Caco-2 (cell line): ENCODE measurements at regions of chr19 and their contacts with region 1.

Region 1: GRCh38 chr19:42244347-42245220 is 2.2 kb upstream of the GSK3A start:
- DNase-seq: peak; percentile 95
- H3K4me3 ChIP-seq: peak overlapping the region; percentile 77
- H3K4me3 Mint-ChIP-seq: peak overlapping the region; percentile 85
- H3K27ac Mint-ChIP-seq: peak overlapping the region; percentile 66
- H3K4me1 ChIP-seq: peaks cover 10% of the 10 kb centered on the region; the same call in 1 of the 2 replicates
- H3K4me1 Mint-ChIP-seq: peaks cover 20% of the 10 kb centered on the region
- H3K27me3 ChIP-seq: no peaks in the 10 kb centered on the region
- H3K27me3 Mint-ChIP-seq: no peaks in the 10 kb centered on the region
- CTCF ChIP-seq: peak; percentile 69 to 75

Region 2: DNA sequence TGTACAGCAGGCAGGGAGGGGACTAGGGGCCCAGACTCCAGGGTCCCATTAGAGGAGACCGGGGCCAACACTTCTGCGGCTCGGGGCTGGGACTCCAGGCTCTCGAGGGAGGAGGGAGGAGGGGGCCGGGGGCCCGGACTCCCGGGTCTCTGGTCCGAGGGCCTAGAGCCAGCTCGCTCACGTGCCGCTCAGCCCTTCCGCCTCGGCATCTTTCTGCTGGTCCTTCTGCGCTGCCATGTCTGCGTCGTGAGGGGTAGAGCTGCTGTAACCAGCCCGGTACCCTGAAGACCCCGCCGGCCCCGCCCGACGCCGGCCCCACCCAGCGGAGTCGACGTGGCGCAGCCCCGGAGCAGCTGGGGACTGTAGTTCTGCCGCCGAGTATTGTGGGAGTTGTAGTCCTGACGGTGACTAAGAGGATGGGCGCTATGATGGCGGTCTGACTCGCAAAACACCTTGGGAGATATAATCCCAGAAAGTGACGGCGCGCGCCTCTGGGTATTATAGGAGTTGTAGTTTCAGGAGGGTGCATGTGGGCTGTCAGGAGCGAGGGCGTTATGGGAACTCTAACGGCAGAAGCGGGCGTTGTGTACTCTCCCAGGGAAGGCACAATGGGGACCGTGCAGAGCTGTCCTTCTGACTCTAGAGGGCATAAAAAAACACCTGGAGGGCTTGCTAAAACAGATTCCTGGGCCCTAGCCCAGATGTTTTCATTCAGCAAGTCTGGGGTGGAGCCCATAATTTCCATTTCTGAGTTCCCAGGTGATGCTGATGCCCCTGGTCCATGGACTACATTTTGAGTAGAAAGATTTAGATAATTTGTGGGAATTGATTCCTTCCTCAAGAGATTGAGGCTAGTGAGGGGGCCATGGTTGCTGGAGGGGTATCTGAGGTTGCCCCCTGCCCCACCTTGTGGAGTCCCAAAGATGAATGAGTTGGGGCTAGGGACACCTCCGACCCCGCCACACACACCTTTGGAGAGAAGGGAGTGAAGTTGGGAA is 285.2 kb before region 1 on chr19 and contains the start of gene RABAC1:
- CTCF ChIA-PET with region 1: no interaction called
- POLR2A ChIA-PET with region 1: no interaction called
- intact Hi-C with region 1: loop called (anchors 1 kb)
- DNase-seq: peak; percentile 93 to 95
- H3K4me3 ChIP-seq: peak within 1 kb of the TSS; percentile 82
- H3K4me3 Mint-ChIP-seq: peak within 1 kb of the TSS; percentile 78
- H3K27ac Mint-ChIP-seq: peak within 1 kb of the TSS; percentile 81
- H3K4me1 ChIP-seq: peaks cover 14% of the 10 kb centered on the region
- H3K4me1 Mint-ChIP-seq: peaks cover 13% of the 10 kb centered on the region
- H3K27me3 ChIP-seq: no peaks in the 10 kb centered on the region
- H3K27me3 Mint-ChIP-seq: no peaks in the 10 kb centered on the region
- CTCF ChIP-seq: peak in 1 of 2 experiments; percentile 44
- total RNA-seq, gene RABAC1: 64.4 and 70.7 TPM in 2 replicates

Region 3: DNA sequence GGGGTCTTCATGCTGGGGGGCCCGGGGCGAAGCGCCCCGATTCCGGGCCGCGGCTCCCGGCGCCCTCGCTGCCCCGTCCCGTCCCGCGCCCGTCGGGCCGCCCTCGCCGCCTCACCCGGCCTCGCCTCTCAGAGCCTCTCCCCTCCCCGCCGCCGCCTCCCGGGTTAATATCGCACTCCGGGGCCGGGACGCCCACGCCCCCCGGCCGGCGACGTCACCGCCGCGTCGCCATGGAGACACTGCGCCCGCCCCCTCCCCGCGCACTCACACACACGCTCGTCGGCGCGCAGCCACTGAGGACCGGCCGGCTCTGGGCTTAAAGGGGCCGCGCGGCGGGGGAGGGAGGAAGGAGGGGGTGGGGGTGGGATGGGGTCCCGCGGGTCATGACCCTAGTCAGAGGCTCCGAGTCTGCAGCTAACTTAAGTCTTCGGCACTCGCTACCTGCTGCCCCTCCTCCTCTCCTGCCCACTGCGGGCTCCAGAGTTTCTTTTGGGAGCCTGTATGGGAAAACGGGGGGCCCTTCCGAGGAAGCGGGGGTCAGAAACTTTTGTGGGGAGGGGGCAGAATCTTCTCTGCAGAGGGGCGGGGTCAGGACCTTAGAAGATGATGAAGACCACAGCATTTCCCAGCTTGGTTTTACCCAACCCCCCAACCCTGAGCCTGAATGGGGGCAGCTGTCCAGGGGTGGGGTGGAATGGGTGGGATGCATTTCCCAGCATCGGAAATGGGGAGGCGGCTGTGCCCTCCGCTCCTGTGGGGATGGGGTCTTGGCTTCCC is 10.6 kb after region 1 on chr19 and contains the start of gene ERF:
- CTCF ChIA-PET with region 1: interaction called, 3 read pairs
- POLR2A ChIA-PET with region 1: interaction called, 6 read pairs
- intact Hi-C with region 1: loop called (anchors 1 kb)
- DNase-seq: peak; percentile 93 to 97
- H3K4me3 ChIP-seq: peak within 1 kb of the TSS; percentile 74
- H3K4me3 Mint-ChIP-seq: peak within 1 kb of the TSS; percentile 87
- H3K27ac Mint-ChIP-seq: peak within 1 kb of the TSS; percentile 89
- H3K4me1 ChIP-seq: peaks cover 21% of the 10 kb centered on the region
- H3K4me1 Mint-ChIP-seq: peaks cover 21% of the 10 kb centered on the region
- H3K27me3 ChIP-seq: no peaks in the 10 kb centered on the region
- H3K27me3 Mint-ChIP-seq: no peaks in the 10 kb centered on the region
- CTCF ChIP-seq: no peak
- total RNA-seq, gene ERF: 134 and 149 TPM in 2 replicates

Region 4: DNA sequence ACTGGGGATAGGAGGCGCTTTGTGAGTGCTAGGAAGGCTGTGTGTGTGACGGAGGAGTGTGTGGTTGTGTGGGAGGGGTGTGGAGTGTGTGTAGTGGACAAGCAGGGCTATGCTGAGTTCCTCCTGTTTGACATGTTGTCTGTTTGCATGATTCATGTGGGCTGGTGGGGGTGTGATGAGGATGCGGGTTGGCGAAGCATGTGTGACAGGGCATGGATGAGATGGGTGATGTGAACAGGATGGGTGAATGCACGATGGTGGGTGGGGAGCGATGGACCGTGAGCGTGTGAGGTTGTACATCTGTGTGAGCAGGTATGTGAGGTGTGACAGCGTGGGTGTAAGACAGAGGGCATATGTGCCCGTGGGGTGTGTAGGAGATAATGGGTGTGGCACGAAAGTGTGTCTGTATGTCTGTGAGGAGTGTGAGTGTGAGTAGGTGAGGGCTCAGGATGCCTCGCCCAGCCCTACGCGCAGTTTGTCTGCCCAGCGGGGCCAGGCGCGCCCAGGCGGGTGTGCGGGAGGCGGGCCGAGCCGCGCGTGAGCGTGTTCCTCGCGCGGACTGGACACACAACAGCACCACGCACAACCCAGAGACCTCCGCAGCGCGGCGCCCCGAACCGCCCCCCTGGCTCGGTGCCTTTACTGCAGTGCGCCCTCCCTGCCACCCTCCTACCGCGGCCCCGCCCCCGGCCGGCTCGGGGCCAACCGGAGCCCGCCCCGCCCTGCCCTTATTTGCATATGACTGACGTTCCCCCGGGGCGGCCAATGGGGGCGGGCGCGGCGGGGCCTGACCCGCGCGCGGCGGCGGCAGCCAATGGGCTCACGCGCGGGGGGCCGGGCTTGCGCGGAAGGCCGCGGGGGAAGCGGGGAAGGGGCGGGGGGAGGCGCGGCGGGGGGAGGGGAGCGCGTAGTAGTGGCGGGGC is 38.8 kb after region 1 on chr19:
- CTCF ChIA-PET with region 1: interaction called, 25 read pairs
- POLR2A ChIA-PET with region 1: interaction called, 11 read pairs
- intact Hi-C with region 1: loop called (anchors 1 kb)
- DNase-seq: peak; percentile 95 to 98
- H3K4me3 ChIP-seq: peak overlapping the region; percentile 79
- H3K4me3 Mint-ChIP-seq: no peak overlapping the region
- H3K27ac Mint-ChIP-seq: no peak overlapping the region
- H3K4me1 ChIP-seq: peaks cover 40% of the 10 kb centered on the region
- H3K4me1 Mint-ChIP-seq: peaks cover 29% of the 10 kb centered on the region
- H3K27me3 ChIP-seq: no peaks in the 10 kb centered on the region
- H3K27me3 Mint-ChIP-seq: no peaks in the 10 kb centered on the region
- CTCF ChIP-seq: no peak

Region 5: GRCh38 chr19:42325273-42325895 is 80.8 kb after region 1 on chr19 and contains the start of gene MEGF8:
- CTCF ChIA-PET with region 1: no interaction called
- POLR2A ChIA-PET with region 1: no interaction called
- intact Hi-C with region 1: loop called (anchors 1 kb)
- DNase-seq: peak; percentile 99
- H3K4me3 ChIP-seq: peak within 1 kb of the TSS; percentile 71
- H3K4me3 Mint-ChIP-seq: peak within 1 kb of the TSS; percentile 89
- H3K27ac Mint-ChIP-seq: peak within 1 kb of the TSS; percentile 72
- H3K4me1 ChIP-seq: no peaks in the 10 kb centered on the region; the same call in 1 of the 2 replicates
- H3K4me1 Mint-ChIP-seq: peaks cover 17% of the 10 kb centered on the region
- H3K27me3 ChIP-seq: no peaks in the 10 kb centered on the region
- H3K27me3 Mint-ChIP-seq: peaks cover 3% of the 10 kb centered on the region
- CTCF ChIP-seq: peak; percentile 81 to 91
- total RNA-seq, gene MEGF8: 17.9 and 19.3 TPM in 2 replicates

Region 6: GRCh38 chr19:42363614-42364346 is 119.2 kb after region 1 on chr19:
- CTCF ChIA-PET with region 1: no interaction called
- POLR2A ChIA-PET with region 1: no interaction called
- intact Hi-C with region 1: no loop called
- DNase-seq: no peak
- H3K4me3 ChIP-seq: no peak overlapping the region
- H3K4me3 Mint-ChIP-seq: no peak overlapping the region
- H3K27ac Mint-ChIP-seq: no peak overlapping the region
- H3K4me1 ChIP-seq: no peaks in the 10 kb centered on the region
- H3K4me1 Mint-ChIP-seq: peaks cover 14% of the 10 kb centered on the region
- H3K27me3 ChIP-seq: no peaks in the 10 kb centered on the region
- H3K27me3 Mint-ChIP-seq: no peaks in the 10 kb centered on the region
- CTCF ChIP-seq: no peak